HCT116 (cell line): ENCODE measurements at regions of chr18 and their contacts with region 1.

Region 1: GRCh38 chr18:41954827-41955613 is at the start of gene PIK3C3:
- DNase-seq: peak; percentile 94
- ATAC-seq: peak; percentile 96
- H3K4me3 ChIP-seq: peak within 1 kb of the TSS; percentile 89 to 95
- H3K27ac ChIP-seq: peak within 1 kb of the TSS; percentile 19
- H3K4me1 ChIP-seq: peaks cover 6 to 10% of the 10 kb centered on the region in 2 experiments; a peak in 2 of 4 replicates
- H3K27me3 ChIP-seq: no peaks in the 10 kb centered on the region
- CTCF ChIP-seq: no peak
- POLR2A ChIP-seq: no peak
- RAD21 ChIP-seq: no peak
- total RNA-seq, gene PIK3C3: 40.4 TPM

Region 2: DNA sequence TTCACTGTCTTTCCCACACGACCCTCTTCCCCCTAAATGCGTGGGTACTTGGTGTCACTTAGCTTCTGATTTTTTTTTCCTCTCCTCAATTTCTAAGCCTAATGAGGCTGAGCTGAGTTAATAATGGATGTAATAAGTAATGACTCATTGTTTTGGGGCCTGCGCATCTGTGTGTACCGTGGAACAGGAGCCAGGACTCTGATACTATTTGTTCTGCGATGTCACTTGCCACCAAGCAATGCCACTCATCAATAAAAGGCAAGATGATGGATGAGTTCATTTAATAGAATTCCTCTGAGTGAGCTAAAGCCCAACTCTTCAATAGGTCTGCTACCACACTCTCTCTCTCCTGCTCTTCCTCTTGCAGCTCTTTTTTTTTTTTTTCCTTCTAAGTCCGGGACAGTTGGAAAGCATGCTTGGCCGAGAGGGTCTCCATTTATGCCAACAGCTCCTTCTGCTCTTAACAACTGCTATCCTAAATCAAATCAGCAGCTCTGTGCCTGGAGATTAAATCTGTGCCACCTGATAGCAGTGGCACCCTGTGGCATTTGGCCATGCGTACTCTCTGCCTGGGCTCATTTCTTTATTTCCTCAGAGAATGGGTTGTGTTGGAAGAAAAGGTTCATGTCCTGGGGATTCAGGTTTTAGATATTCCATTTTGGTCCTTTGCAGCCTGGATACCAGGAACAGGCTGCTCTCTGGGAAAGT is 1284.2 kb before region 1 on chr18:
- CTCF ChIA-PET with region 1: no interaction called
- POLR2A ChIA-PET with region 1: no interaction called
- RAD21 ChIA-PET with region 1: no interaction called
- intact Hi-C with region 1: no loop called
- DNase-seq: no peak
- ATAC-seq: no peak
- H3K4me3 ChIP-seq: no peak overlapping the region
- H3K27ac ChIP-seq: no peak overlapping the region
- H3K4me1 ChIP-seq: no peaks in the 10 kb centered on the region
- H3K27me3 ChIP-seq: no peaks in the 10 kb centered on the region
- CTCF ChIP-seq: no peak
- POLR2A ChIP-seq: no peak
- RAD21 ChIP-seq: no peak

Region 3: GRCh38 chr18:42011053-42011452 is 56.0 kb after region 1 on chr18:
- CTCF ChIA-PET with region 1: no interaction called
- POLR2A ChIA-PET with region 1: no interaction called
- RAD21 ChIA-PET with region 1: no interaction called
- intact Hi-C with region 1: loop called (anchors 5 kb)
- DNase-seq: no peak
- ATAC-seq: no peak
- H3K4me3 ChIP-seq: no peak overlapping the region
- H3K27ac ChIP-seq: no peak overlapping the region
- H3K4me1 ChIP-seq: no peaks in the 10 kb centered on the region
- H3K27me3 ChIP-seq: no peaks in the 10 kb centered on the region
- CTCF ChIP-seq: no peak
- POLR2A ChIP-seq: no peak
- RAD21 ChIP-seq: no peak